Caco-2 (cell line): ENCODE measurements at regions of chr14 and their contacts with region 1.

Region 1: DNA sequence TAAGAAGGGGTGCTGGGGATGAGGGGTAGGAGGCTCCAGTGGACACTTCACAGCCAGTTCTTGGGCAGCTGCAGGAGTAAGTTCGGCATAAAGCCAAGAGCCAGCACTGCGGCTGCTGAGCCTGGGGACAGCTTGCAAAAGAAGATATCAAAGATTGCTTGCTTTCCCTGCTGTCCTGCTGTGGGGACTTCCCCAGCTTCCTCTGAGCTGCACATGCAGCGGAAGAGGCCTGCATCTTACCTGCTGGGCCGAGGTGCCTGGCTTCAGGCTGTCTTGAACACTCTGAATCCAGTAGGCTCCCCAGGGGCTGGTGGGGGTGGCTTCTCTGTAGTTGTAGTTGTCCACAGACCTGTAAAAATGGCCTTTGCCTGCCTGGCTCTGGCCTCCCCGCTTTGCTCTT is 1.3 kb downstream of the CHGA start:
- DNase-seq: no peak
- H3K4me3 ChIP-seq: no peak overlapping the region
- H3K4me3 Mint-ChIP-seq: no peak overlapping the region
- H3K27ac Mint-ChIP-seq: no peak overlapping the region
- H3K4me1 ChIP-seq: no peaks in the 10 kb centered on the region
- H3K4me1 Mint-ChIP-seq: no peaks in the 10 kb centered on the region
- H3K27me3 ChIP-seq: no peaks in the 10 kb centered on the region
- H3K27me3 Mint-ChIP-seq: peaks cover 12% of the 10 kb centered on the region
- CTCF ChIP-seq: no peak

Region 2: GRCh38 chr14:92880869-92881289 is 43.4 kb before region 1 on chr14:
- CTCF ChIA-PET with region 1: no interaction called
- POLR2A ChIA-PET with region 1: no interaction called
- intact Hi-C with region 1: no loop called
- DNase-seq: peak; percentile 49 to 61
- H3K4me3 ChIP-seq: no peak overlapping the region
- H3K4me3 Mint-ChIP-seq: no peak overlapping the region
- H3K27ac Mint-ChIP-seq: no peak overlapping the region
- H3K4me1 ChIP-seq: no peaks in the 10 kb centered on the region
- H3K4me1 Mint-ChIP-seq: no peaks in the 10 kb centered on the region
- H3K27me3 ChIP-seq: no peaks in the 10 kb centered on the region; the same call in 1 of the 2 replicates
- H3K27me3 Mint-ChIP-seq: peaks cover 28% of the 10 kb centered on the region
- CTCF ChIP-seq: peak; percentile 40 to 43

Region 3: DNA sequence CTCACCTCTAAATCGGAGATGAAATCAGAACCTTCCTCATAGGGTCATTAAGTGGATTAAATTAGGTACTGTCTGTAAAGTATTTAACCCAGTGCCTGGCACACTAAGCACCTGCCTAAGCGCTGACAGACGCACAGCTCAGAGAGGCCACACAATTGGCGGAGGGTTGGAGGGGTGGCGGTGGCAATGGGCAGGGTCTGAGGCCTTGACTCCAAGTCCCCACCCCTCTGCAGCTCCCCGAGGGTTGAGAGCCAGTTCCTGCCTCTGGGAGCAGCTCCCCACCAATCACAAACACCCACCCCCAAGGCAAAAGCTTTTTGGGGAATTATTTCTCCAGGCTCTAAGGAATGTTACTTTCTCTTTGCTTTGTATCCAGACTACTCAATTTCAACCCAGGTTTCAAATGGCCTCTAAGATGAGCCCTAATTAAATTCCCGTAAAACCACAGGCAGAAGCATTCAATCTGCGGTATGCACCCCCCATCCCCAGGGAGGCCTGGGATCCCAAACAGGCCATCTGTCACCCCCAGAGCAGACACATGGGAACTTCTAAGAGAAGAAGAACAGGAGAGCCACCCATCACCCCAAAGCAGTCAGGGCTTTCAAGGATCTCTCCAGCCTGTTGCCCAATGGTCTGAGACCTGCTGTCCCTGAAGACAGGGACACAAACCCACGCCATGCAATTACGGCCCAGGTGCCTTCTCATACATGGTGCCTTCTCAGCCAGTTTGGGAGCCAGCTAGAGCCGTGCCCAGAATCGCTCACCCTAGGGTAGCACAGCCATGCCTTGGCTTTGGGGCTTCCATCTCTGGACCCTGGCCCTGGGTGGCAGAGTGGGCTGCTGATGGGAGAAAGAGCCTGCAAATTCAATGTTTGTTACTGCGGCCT is 64.8 kb after region 1 on chr14:
- CTCF ChIA-PET with region 1: no interaction called
- POLR2A ChIA-PET with region 1: no interaction called
- intact Hi-C with region 1: loop called (anchors 2 kb)
- DNase-seq: no peak
- H3K4me3 ChIP-seq: no peak overlapping the region
- H3K4me3 Mint-ChIP-seq: no peak overlapping the region
- H3K27ac Mint-ChIP-seq: no peak overlapping the region
- H3K4me1 ChIP-seq: no peaks in the 10 kb centered on the region
- H3K4me1 Mint-ChIP-seq: no peaks in the 10 kb centered on the region
- H3K27me3 ChIP-seq: no peaks in the 10 kb centered on the region
- H3K27me3 Mint-ChIP-seq: no peaks in the 10 kb centered on the region
- CTCF ChIP-seq: no peak

Region 4: DNA sequence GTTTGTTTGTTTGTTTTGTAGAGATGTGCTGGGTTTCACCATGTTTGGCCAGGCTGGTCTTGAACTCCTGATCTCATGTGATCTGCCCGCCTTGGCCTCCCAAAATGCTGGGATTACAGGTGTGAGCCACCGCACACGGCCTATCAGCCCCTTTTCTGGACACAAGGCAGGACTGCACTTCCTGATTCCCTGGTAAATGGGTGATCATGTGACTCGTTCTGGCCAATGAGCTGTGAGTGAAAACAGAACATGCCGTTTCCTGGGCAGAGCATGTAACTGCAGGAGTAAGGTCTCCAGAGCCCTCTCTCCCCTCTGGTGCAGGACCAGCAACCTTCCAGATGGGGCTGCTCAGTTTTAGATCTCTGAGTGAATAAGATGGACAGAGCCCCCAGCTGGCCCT is 98.8 kb after region 1 on chr14:
- CTCF ChIA-PET with region 1: no interaction called
- POLR2A ChIA-PET with region 1: no interaction called
- intact Hi-C with region 1: no loop called
- DNase-seq: peak; percentile 36 to 56
- H3K4me3 ChIP-seq: no peak overlapping the region
- H3K4me3 Mint-ChIP-seq: no peak overlapping the region
- H3K27ac Mint-ChIP-seq: peak overlapping the region; percentile 63
- H3K4me1 ChIP-seq: no peaks in the 10 kb centered on the region
- H3K4me1 Mint-ChIP-seq: no peaks in the 10 kb centered on the region
- H3K27me3 ChIP-seq: no peaks in the 10 kb centered on the region
- H3K27me3 Mint-ChIP-seq: no peaks in the 10 kb centered on the region
- CTCF ChIP-seq: no peak

Region 5: GRCh38 chr14:93103392-93104080 is 179.3 kb after region 1 on chr14:
- CTCF ChIA-PET with region 1: no interaction called
- POLR2A ChIA-PET with region 1: no interaction called
- intact Hi-C with region 1: no loop called
- DNase-seq: no peak
- H3K4me3 ChIP-seq: no peak overlapping the region
- H3K4me3 Mint-ChIP-seq: no peak overlapping the region
- H3K27ac Mint-ChIP-seq: no peak overlapping the region
- H3K4me1 ChIP-seq: peaks cover 11% of the 10 kb centered on the region; the same call in 1 of the 2 replicates
- H3K4me1 Mint-ChIP-seq: no peaks in the 10 kb centered on the region
- H3K27me3 ChIP-seq: no peaks in the 10 kb centered on the region
- H3K27me3 Mint-ChIP-seq: no peaks in the 10 kb centered on the region
- CTCF ChIP-seq: no peak